Left ventricle myocardium superior (tissue), 1 donor: ENCODE measurements at regions of chr2 and their contacts with region 1.

Region 1: GRCh38 chr2:109242654-109243331 is 113.8 kb downstream of the SH3RF3 start:
- DNase-seq: peak; percentile 51
- ATAC-seq: peak; percentile 79

Region 2: GRCh38 chr2:109254174-109254904 is 11.5 kb after region 1 on chr2:
- intact Hi-C with region 1: loop called (anchors 1 kb)
- DNase-seq: no peak
- ATAC-seq: peak; percentile 24

Region 3: GRCh38 chr2:109331896-109332848 is 89.4 kb after region 1 on chr2:
- intact Hi-C with region 1: no loop called
- DNase-seq: peak; percentile 79
- ATAC-seq: peak; percentile 90

Region 4: DNA sequence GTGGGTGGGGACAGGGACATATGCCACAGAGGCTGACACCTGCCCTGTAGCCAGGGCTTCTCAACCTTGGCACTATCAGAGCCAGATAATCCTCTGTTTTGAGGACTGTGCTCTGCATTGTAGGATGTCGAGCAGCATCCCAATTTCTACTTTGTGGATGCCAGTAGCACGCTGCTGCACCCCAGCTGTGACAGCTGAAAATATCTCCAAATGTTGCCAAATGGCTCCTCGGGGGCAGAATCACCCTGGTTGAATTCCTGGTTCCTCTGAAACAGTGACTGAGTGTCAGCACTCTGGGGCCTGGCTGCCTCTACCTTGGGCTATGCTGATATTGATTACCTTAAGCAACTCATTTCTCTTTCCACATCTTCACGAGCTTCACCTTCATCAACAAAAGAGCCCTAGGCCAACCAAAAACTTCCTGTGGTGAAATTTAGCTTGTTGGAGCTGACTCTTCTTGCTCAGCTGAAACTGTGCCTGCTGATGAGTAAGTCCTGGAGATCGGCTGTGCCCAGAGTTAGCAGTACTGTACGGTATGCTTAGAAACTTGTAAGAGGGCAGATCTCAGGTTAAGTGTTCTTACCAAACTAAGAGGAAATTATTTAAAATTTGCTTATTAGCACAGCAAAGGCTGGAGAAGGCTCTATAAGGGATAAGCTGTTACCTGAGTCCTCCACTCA is 232.9 kb after region 1 on chr2:
- intact Hi-C with region 1: no loop called
- DNase-seq: no peak
- ATAC-seq: no peak